Activated CD8-positive, alpha-beta memory T cell treated with anti-CD3 and anti-CD28 coated beads, Interleukin-2, amount 10 ng/mL, durations not matched to agents 7 days and 5 days (primary cell): ENCODE measurements at regions of chr17 and their contacts with region 1.

Region 1: DNA sequence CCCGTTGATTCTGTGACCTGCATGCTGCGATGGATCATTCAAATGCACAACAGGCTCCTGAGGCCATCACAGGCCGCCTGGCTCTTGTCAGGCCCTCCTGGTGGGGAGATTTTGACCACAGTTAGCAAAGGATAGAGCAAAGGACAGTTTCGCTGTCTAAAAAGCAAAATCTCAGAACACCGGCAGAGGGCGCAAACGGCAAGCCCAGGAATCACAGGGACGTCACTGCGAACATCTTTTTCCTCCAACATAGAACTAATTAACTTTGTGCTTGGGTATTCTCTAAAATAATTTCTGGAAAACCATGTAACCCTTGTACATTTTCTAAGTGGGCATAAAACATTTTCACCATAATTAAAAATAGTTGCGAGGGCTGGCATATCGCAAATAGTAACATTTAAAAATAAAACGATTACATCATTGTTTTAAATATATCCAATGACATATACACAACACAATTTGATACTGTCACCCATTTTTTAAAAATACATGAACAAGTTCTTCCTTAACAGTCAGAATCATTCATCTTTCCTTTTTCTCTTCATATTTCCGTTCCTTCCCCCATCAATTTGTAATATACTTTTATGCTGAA is 19.7 kb upstream of the SLC47A1 start:
- DNase-seq: peak; percentile 73
- ATAC-seq: peak; percentile 61
- H3K4me3 Mint-ChIP-seq: no peak overlapping the region
- H3K27ac Mint-ChIP-seq: no peak overlapping the region
- H3K4me1 Mint-ChIP-seq: peaks cover 2% of the 10 kb centered on the region
- H3K27me3 Mint-ChIP-seq: no peaks in the 10 kb centered on the region

Region 2: DNA sequence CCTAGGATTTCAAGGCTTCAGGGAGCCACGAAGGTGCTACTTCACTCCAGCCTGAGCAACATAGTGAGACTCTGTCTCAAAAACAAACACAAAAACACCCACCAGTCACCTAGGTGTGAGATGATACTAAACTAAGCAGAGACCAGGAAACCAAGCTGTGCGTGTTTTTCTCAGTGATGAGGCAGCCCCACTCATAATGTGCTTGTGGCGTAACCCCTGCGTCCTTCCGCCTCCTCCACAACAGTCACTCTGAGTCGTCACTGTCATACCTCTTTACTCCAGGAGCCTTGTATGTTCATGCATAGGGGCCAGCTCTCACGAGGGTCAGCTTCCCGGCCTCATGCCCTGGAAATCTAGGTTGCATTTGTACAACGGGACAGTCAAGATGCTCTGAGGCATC is 11.5 kb before region 1 on chr17:
- CTCF ChIA-PET with region 1: interaction called, 11 read pairs
- DNase-seq: peak; percentile 85
- ATAC-seq: peak; percentile 96
- H3K4me3 Mint-ChIP-seq: no peak overlapping the region
- H3K27ac Mint-ChIP-seq: peak overlapping the region; percentile 17
- H3K4me1 Mint-ChIP-seq: peaks cover 9% of the 10 kb centered on the region
- H3K27me3 Mint-ChIP-seq: peaks cover 13% of the 10 kb centered on the region

Region 3: DNA sequence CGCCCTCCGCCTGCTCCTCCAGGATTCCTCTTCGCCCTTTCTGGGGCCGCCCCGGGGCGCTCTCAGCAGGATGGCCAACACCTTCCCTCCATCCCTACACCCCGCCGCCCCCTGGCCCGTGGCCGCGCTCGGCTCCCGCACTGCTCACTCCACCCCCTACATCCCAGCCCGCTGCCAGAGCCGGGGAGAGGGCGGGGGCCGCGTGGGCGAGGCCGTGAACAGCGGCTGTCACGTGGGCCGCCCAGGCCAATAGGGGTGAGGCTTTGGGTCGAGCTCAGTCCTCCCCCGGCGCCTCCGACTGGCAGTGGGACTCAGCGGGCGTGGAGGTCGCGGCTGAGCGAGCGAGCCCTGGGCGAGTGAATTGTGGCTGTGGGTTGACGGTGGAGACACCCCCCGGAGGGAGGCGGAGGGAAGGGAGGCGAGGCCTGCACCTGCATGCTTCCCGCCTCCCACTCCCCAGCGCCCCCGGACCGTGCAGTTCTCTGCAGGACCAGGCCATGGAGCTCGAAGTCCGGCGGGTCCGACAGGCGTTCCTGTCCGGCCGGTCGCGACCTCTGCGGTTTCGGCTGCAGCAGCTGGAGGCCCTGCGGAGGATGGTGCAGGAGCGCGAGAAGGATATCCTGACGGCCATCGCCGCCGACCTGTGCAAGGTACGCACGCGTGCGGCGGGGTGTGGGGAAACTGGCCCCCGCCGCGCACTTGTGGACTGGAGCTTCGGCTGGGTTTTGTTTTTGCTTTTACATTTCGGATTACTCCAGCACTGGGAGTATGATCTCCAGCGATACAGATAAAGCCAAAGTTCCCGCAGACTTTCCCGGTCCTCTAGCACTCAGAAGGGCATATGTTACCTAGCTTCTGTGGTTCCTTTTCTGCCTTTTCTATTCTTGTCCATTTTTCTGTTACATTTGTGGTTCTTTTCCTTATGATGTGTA is 134.7 kb after region 1 on chr17 and contains the start of gene ALDH3A2:
- CTCF ChIA-PET with region 1: interaction called, 24 read pairs
- DNase-seq: peak; percentile 96
- ATAC-seq: peak; percentile 97
- H3K4me3 Mint-ChIP-seq: peak within 1 kb of the TSS; percentile 90
- H3K27ac Mint-ChIP-seq: peak within 1 kb of the TSS; percentile 95
- H3K4me1 Mint-ChIP-seq: peaks cover 41% of the 10 kb centered on the region
- H3K27me3 Mint-ChIP-seq: peaks cover 12% of the 10 kb centered on the region
- total RNA-seq, gene ALDH3A2: 29.9 to 30.5 TPM